Activated CD4-positive, alpha-beta memory T cell treated with anti-CD3 and anti-CD28 coated beads for 36 hours (primary cell): ENCODE measurements at regions of chr1 and their contacts with region 1.

Region 1: GRCh38 chr1:111030590-111030989 is 66.9 kb upstream of the LRIF1 start:
- DNase-seq: peak; percentile 53
- H3K4me3 Mint-ChIP-seq: no peak overlapping the region
- H3K27ac Mint-ChIP-seq: no peak overlapping the region
- H3K4me1 Mint-ChIP-seq: no peaks in the 10 kb centered on the region
- H3K27me3 Mint-ChIP-seq: peaks cover 10% of the 10 kb centered on the region

Region 2: DNA sequence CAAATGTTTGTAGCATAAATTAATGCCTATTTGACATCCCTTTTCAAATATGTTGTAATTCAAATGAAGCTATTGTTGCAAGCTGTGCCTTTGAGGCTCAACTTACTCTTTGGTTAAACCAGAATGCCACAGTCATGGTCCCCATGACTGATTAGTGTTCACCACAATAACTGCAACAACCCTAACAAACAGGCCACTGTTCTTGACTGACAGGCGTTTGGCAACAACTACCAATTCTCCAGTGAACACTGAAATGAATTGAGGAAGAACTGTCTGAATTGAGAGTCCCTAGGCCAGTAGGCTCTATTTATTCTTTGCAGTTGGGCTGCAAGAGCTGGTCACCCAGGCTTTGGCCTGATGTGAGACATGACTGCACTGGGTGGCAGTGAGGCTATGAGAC is 1946.7 kb before region 1 on chr1:
- CTCF ChIA-PET with region 1: no interaction called
- POLR2A ChIA-PET with region 1: no interaction called
- intact Hi-C with region 1: no loop called
- DNase-seq: no peak
- H3K4me3 Mint-ChIP-seq: no peak overlapping the region
- H3K27ac Mint-ChIP-seq: no peak overlapping the region
- H3K4me1 Mint-ChIP-seq: no peaks in the 10 kb centered on the region
- H3K27me3 Mint-ChIP-seq: no peaks in the 10 kb centered on the region

Region 3: DNA sequence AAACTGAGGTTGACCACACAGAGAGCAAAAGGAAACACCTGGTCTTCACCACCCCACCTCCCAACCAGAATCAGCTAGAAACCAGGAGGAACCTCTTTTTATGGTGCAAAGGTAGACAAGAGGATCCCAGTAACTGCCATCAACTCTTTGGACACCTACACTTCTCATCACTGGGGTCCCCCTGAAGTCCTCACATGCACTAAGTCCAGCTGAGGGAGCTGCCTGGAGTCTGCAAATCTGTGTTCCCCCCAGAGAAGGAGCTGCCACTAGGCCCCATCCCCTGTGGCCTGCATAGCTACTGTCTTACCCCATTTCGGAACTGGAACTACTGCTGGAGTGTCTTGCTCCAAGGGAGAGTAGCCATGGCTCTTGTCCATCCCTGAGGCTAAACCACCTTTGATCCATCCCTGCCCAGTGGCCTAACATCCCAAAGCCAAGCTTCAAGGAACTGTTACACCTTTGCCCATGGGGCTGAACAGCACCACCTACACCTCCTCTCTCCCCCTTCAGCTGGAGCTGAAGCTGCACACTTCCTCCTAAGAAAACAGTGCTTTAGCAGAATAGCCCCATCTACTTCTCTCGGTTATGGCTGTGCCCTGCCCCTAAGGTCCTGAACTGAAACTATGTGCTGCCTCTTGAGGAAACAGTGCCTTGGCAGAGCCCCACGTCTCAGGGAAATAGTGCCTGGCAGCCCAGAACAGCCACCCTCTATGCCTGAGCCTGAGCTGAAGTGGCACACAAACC is 243.1 kb before region 1 on chr1:
- CTCF ChIA-PET with region 1: interaction called, 20 read pairs
- POLR2A ChIA-PET with region 1: no interaction called
- intact Hi-C with region 1: loop called (anchors 2 kb)
- DNase-seq: peak; percentile 38
- H3K4me3 Mint-ChIP-seq: no peak overlapping the region
- H3K27ac Mint-ChIP-seq: peak overlapping the region; percentile 66
- H3K4me1 Mint-ChIP-seq: peaks cover 50% of the 10 kb centered on the region
- H3K27me3 Mint-ChIP-seq: no peaks in the 10 kb centered on the region

Region 4: GRCh38 chr1:110986407-110986891 is 44.1 kb before region 1 on chr1:
- CTCF ChIA-PET with region 1: interaction called, 12 read pairs
- POLR2A ChIA-PET with region 1: no interaction called
- intact Hi-C with region 1: no loop called
- DNase-seq: no peak
- H3K4me3 Mint-ChIP-seq: no peak overlapping the region
- H3K27ac Mint-ChIP-seq: no peak overlapping the region
- H3K4me1 Mint-ChIP-seq: peaks cover 13% of the 10 kb centered on the region
- H3K27me3 Mint-ChIP-seq: peaks cover 13% of the 10 kb centered on the region

Region 5: GRCh38 chr1:111015225-111015624 is 15.4 kb before region 1 on chr1:
- CTCF ChIA-PET with region 1: interaction called, 21 read pairs
- POLR2A ChIA-PET with region 1: no interaction called
- intact Hi-C with region 1: no loop called
- DNase-seq: no peak
- H3K4me3 Mint-ChIP-seq: no peak overlapping the region
- H3K27ac Mint-ChIP-seq: no peak overlapping the region
- H3K4me1 Mint-ChIP-seq: no peaks in the 10 kb centered on the region
- H3K27me3 Mint-ChIP-seq: peaks cover 14% of the 10 kb centered on the region

Region 6: GRCh38 chr1:111045033-111045722 is 14.6 kb after region 1 on chr1:
- CTCF ChIA-PET with region 1: interaction called, 23 read pairs
- POLR2A ChIA-PET with region 1: no interaction called
- intact Hi-C with region 1: no loop called
- DNase-seq: no peak
- H3K4me3 Mint-ChIP-seq: no peak overlapping the region
- H3K27ac Mint-ChIP-seq: no peak overlapping the region
- H3K4me1 Mint-ChIP-seq: no peaks in the 10 kb centered on the region
- H3K27me3 Mint-ChIP-seq: peaks cover 6% of the 10 kb centered on the region

Region 7: GRCh38 chr1:111334169-111334568 is 303.6 kb after region 1 on chr1:
- CTCF ChIA-PET with region 1: interaction called, 27 read pairs
- POLR2A ChIA-PET with region 1: no interaction called
- intact Hi-C with region 1: loop called (anchors 1 kb)
- DNase-seq: peak; percentile 62
- H3K4me3 Mint-ChIP-seq: no peak overlapping the region
- H3K27ac Mint-ChIP-seq: peak overlapping the region; percentile 54
- H3K4me1 Mint-ChIP-seq: peaks cover 2% of the 10 kb centered on the region
- H3K27me3 Mint-ChIP-seq: no peaks in the 10 kb centered on the region